Activated CD4-positive, alpha-beta memory T cell treated with anti-CD3 and anti-CD28 coated beads, Interleukin-2, amount 10 ng/mL, durations not matched to agents 7 days and 5 days (primary cell): ENCODE measurements at regions of chr15 and their contacts with region 1.

Region 1: GRCh38 chr15:90902040-90902839 is 862 bp upstream of the MAN2A2 start:
- DNase-seq: peak; percentile 77
- H3K4me3 Mint-ChIP-seq: peak overlapping the region; percentile 80
- H3K27ac Mint-ChIP-seq: peak overlapping the region; percentile 81
- H3K4me1 Mint-ChIP-seq: peaks cover 40% of the 10 kb centered on the region
- H3K27me3 Mint-ChIP-seq: no peaks in the 10 kb centered on the region

Region 2: DNA sequence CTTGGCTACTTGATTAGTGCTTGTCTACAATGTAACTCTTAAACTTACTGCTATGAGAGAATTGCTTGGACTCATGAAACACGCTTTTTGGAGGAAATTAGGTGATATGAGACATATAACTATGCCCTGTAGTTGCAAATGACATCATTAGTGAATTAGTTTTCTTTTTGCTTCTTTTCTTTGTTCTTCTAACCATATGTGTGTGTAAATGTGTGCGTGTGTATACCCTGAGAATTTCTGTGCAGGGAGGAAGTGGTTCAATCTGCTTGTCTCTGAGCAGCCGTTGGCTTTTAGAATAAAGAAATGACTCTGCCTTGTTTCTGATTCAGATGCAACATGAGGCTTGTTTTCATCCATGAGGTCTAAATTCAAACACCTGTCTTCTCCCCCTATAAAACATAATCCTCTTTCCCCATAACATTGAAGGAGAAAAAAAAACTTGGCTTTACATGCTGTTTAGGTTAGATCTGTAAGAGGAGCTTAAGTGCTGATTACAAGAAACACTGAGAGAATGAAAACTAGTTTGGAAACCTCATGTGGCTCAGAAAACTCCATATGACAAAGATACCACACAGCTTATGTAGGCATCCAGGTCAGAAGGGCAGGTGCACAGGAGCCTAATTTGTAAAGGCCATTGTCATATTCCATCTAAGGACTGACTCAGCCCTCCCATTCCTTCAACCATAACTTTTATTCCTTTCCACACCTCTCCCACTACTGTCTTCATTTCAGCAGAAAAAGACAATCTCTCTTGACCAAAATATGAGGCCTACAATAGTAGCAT is 215.6 kb before region 1 on chr15:
- CTCF ChIA-PET with region 1: no interaction called
- POLR2A ChIA-PET with region 1: no interaction called
- DNase-seq: peak; percentile 56
- H3K4me3 Mint-ChIP-seq: peak overlapping the region; percentile 15
- H3K27ac Mint-ChIP-seq: peak overlapping the region; percentile 100
- H3K4me1 Mint-ChIP-seq: peaks cover 54% of the 10 kb centered on the region
- H3K27me3 Mint-ChIP-seq: no peaks in the 10 kb centered on the region

Region 3: DNA sequence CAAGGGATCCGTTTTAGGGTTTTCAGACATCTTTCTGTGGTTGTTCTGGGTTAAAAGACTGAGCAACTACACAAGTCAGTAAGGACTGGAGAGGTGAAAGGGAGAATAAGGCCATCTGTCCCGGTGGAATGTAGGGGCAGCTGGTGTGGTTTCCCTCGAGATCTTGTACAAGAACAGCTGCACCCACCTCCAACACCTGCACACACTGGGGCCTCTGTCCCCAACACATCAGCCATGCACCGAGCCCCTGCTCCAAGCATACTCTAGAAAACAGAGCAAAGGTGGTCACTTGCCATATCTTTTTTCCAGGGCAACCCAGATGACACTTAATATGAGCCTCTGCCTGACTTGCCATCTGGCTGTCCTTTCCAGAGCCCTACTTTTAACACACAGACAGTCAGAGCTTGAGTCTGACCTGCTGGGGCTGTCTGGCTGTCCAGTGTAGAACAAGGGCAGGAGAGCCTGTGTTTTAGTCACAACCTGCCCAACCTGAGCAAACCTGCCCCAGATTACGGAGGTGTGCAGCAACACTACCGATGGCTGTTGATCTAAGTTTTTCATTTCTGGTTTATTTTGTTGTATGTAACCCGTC is 13.1 kb after region 1 on chr15:
- CTCF ChIA-PET with region 1: interaction called, 5 read pairs
- POLR2A ChIA-PET with region 1: interaction called, 17 read pairs
- DNase-seq: no peak
- H3K4me3 Mint-ChIP-seq: no peak overlapping the region
- H3K27ac Mint-ChIP-seq: peak overlapping the region; percentile 21
- H3K4me1 Mint-ChIP-seq: no peaks in the 10 kb centered on the region
- H3K27me3 Mint-ChIP-seq: no peaks in the 10 kb centered on the region

Region 4: DNA sequence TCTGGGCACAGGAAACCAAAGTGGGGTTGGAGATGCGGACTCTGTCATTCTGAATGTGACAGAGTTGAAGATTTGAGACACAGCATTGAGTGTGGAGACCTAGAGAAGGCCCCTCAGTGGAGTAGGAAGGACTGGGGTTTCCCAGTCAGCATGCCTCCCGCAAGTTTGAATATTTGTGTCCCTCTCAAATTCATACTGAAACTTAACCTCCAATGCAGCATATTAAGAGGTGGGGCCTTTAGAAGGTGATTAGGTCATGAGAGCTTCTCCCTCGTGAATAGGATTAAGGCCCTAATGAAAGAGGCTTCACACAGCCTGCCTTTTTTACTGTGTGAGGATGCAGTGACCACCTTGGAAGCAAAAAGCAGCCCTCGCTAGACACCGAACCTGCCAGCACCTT is 22.1 kb after region 1 on chr15:
- CTCF ChIA-PET with region 1: interaction called, 210 read pairs
- POLR2A ChIA-PET with region 1: interaction called, 211 read pairs
- DNase-seq: no peak
- H3K4me3 Mint-ChIP-seq: no peak overlapping the region
- H3K27ac Mint-ChIP-seq: peak overlapping the region; percentile 77
- H3K4me1 Mint-ChIP-seq: peaks cover 48% of the 10 kb centered on the region
- H3K27me3 Mint-ChIP-seq: no peaks in the 10 kb centered on the region